Ascending aorta (tissue), 2 donors: ENCODE measurements at regions of chr17 and their contacts with region 1.

Region 1: GRCh38 chr17:80426681-80427326 is 11.8 kb downstream of the ENDOV start:
- DNase-seq: peak in 1 of 2 donors; percentile 75
- H3K4me3 ChIP-seq: no peak overlapping the region
- H3K27ac ChIP-seq: no peak overlapping the region
- H3K4me1 ChIP-seq: peaks cover 0 to 5% of the 10 kb centered on the region in 2 donors
- H3K27me3 ChIP-seq: no peaks in the 10 kb centered on the region
- CTCF ChIP-seq: peak; percentile 93 to 96 (median 96)

Region 2: GRCh38 chr17:80408872-80409271 is 17.9 kb before region 1 on chr17:
- intact Hi-C with region 1: no loop called
- DNase-seq: no peak
- H3K4me3 ChIP-seq: no peak overlapping the region
- H3K27ac ChIP-seq: no peak overlapping the region
- H3K4me1 ChIP-seq: no peaks in the 10 kb centered on the region
- H3K27me3 ChIP-seq: no peaks in the 10 kb centered on the region
- CTCF ChIP-seq: no peak

Region 3: GRCh38 chr17:80575057-80575875 is 148.5 kb after region 1 on chr17:
- intact Hi-C with region 1: loop called (anchors 1 kb)
- DNase-seq: peak; percentile 15 to 81
- H3K4me3 ChIP-seq: no peak overlapping the region
- H3K27ac ChIP-seq: no peak overlapping the region
- H3K4me1 ChIP-seq: no peaks in the 10 kb centered on the region
- H3K27me3 ChIP-seq: no peaks in the 10 kb centered on the region
- CTCF ChIP-seq: peak; percentile 89 to 90 (median 90)

Region 4: DNA sequence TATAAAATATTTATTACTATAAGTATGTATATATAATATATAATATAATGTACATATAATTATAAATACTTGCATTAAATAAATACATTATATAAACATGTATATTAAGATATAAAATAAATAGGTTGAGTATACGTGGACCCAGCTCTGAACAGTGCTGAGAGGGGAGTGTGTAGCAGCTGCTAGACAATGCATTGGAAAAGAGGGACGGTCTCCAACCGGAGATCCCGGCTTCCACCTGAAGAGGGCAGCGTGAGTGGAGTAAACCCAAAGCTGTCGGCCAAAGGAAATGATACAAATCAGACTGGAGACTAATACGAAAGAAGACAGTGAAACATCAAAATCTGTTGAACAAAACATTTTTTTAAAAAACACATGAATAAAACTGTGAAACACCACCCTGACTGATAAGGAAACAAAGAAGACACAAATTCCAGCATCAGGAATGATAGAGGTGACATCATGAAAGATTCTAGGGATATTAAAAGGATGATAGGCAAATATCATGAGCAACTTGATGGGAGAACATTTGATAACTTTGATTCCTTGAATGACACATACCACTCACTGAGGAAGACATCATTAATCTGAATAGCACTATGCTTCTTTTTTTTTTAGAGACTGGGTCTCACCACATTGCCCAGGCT is 439.5 kb after region 1 on chr17:
- intact Hi-C with region 1: loop called (anchors 10 kb)
- DNase-seq: peak in 1 of 2 donors; percentile 72
- H3K4me3 ChIP-seq: no peak overlapping the region
- H3K27ac ChIP-seq: no peak overlapping the region
- H3K4me1 ChIP-seq: no peaks in the 10 kb centered on the region
- H3K27me3 ChIP-seq: no peaks in the 10 kb centered on the region
- CTCF ChIP-seq: peak; percentile 47 to 69 (median 64)

Region 5: DNA sequence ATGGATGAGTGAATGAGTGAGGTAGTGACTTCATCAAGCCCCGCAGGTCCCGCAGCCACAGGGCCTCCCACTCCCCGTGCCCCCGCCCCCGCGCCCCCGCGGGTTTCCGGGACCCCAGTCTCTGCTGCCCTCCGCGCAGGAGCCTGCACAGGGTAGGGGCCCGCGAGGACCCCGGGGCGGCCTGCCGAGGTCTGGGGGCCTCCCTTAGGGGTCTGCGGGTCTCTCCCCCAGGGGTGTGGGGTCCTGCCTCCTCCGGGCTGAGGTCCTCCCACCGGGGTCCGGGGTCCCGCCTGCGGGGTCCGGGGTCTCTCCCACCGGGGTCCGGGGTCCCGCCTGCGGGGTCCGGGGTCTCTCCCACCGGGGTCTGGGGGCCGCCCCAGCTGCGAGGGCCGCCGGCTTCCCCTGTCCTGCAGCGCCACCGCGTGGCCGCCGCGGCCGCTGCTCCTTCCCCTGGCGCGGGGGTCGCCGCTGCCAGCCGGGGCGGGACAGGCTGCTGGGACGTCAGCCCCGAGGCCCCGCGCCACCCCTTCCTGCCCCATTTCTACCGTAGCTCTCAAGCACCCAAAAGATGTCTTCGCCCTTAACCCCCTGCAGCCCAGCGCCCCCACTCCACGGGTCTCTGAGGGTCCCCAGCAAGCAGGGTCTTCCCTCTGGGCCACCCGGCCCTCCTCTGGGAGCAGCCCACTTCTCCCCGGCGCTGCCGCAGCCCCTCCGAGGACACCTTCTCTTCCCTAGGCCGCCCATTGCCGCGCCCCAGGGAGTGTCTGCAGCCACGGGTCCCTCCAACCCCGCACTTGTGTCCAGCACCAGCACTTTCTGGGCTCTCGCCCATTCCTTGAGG is 554.5 kb after region 1 on chr17:
- intact Hi-C with region 1: loop called (anchors 2 kb)
- DNase-seq: no peak
- H3K4me3 ChIP-seq: peak overlapping the region in 1 of 2 donors; percentile 11
- H3K27ac ChIP-seq: no peak overlapping the region
- H3K4me1 ChIP-seq: peaks cover 4 to 7% of the 10 kb centered on the region in 2 donors
- H3K27me3 ChIP-seq: no peaks in the 10 kb centered on the region
- CTCF ChIP-seq: peak; percentile 26 to 95 (median 73)

Region 6: GRCh38 chr17:81101614-81102306 is 675.0 kb after region 1 on chr17:
- intact Hi-C with region 1: loop called (anchors 1 kb)
- DNase-seq: peak; percentile 28 to 89
- H3K4me3 ChIP-seq: no peak overlapping the region
- H3K27ac ChIP-seq: no peak overlapping the region
- H3K4me1 ChIP-seq: peaks cover 7 to 8% of the 10 kb centered on the region in 2 donors
- H3K27me3 ChIP-seq: no peaks in the 10 kb centered on the region
- CTCF ChIP-seq: peak; percentile 100